ENCODE measurements at regions of chr10 and their contacts with region 1.

Region 1: GRCh38 chr10:73956476-73957359 is 41.2 kb upstream of the VCL start:
- DNase-seq: peak; percentile 35
- H3K4me3 Mint-ChIP-seq: peak overlapping the region; percentile 57
- H3K27ac Mint-ChIP-seq: peak overlapping the region; percentile 85
- H3K4me1 Mint-ChIP-seq: peaks cover 44% of the 10 kb centered on the region
- H3K27me3 Mint-ChIP-seq: no peaks in the 10 kb centered on the region

Region 2: DNA sequence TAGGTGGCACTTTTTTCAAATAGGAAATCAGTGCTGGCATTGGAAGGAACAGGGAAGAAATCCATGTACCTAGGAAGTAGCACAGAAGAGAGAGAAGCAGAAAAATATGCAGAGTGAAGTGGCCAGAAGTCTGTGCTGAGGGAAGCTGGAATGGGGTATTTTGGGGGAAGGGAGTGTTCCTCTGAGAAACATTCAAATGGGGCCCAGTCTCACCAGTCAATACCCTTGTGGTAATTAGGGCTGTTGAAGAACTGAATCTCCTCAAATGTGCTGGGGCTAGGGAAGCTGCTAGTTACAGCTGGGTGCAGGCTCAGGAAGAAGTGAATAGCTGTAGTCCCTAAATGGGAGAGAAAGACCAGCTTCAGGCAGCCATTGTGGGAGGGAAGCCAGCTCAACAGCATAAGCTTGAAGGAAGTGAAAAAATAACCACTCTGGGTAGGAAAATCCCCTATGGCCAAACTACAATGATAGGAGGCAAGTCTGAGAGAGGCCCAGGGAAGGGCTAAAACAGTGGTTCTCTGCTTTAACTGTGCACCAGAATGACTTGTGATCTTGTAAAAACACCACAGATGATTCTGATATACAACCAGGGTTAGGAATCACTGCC is 152.9 kb before region 1 on chr10:
- intact Hi-C with region 1: no loop called
- DNase-seq: no peak
- H3K4me3 Mint-ChIP-seq: no peak overlapping the region
- H3K27ac Mint-ChIP-seq: peak overlapping the region; percentile 71
- H3K4me1 Mint-ChIP-seq: peaks cover 19% of the 10 kb centered on the region
- H3K27me3 Mint-ChIP-seq: no peaks in the 10 kb centered on the region

Region 3: DNA sequence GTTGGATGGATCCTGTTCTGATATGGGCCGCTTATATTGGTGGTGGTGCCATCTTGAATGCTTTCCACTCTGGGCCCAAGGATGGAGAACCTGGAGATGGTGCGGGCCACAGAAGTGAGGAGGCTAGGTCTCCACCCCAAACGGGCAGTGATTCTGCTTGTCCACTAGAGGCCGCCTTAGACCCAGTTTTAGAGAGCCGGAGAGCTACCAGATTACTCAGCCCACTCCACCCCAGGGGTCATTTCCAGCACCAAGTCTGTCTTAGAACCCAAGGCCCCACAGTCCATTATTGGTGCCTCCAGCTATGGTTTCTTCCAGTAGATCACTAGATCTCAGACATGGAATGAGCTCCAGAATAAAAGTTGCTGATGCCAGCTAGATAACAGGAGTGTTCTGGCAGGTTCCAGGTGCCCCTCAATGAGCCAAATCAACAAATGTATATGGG is 70.6 kb before region 1 on chr10:
- intact Hi-C with region 1: loop called (anchors 5 kb)
- DNase-seq: peak; percentile 56
- H3K4me3 Mint-ChIP-seq: no peak overlapping the region
- H3K27ac Mint-ChIP-seq: no peak overlapping the region
- H3K4me1 Mint-ChIP-seq: peaks cover 8% of the 10 kb centered on the region
- H3K27me3 Mint-ChIP-seq: no peaks in the 10 kb centered on the region

Region 4: DNA sequence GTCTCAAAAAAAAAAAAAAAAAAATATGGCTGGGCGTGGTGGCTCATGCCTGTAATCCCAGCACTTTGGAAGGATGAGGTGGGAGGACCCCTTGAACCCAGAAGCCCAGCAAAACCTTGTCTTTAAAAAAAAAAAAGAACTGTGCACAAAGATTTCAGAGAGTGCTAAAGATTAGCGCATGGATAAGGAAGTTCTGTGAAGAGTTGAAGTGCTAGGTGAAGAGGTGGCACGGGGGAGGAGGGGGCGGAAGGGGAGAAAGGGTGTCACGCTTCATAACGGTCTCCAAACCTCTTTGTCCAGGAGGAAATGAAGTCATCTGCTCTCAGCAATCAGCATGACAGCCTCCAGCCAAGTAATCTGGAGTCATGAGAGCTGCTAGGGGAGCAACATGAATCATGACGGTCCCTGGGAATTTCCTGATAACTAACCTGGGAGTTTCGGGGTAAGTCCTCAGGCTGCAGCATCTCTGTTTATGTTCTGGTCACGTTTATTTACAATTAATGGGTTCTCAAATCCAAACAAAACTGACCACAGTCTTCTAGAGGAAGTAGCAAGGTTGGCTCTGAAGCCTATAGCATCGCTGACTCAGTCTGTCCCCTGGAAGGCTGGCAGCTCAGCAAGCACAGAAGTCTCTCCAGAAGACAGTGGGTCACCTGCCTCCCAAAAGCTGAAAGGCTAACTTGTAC is 47.7 kb before region 1 on chr10:
- intact Hi-C with region 1: loop called (anchors 2 kb)
- DNase-seq: peak; percentile 53
- H3K4me3 Mint-ChIP-seq: peak overlapping the region; percentile 58
- H3K27ac Mint-ChIP-seq: peak overlapping the region; percentile 73
- H3K4me1 Mint-ChIP-seq: peaks cover 40% of the 10 kb centered on the region
- H3K27me3 Mint-ChIP-seq: peaks cover 5% of the 10 kb centered on the region

Region 5: GRCh38 chr10:73940634-73941221 is 16.0 kb before region 1 on chr10:
- intact Hi-C with region 1: loop called (anchors 1 kb)
- DNase-seq: peak; percentile 80
- H3K4me3 Mint-ChIP-seq: no peak overlapping the region
- H3K27ac Mint-ChIP-seq: no peak overlapping the region
- H3K4me1 Mint-ChIP-seq: peaks cover 10% of the 10 kb centered on the region
- H3K27me3 Mint-ChIP-seq: peaks cover 6% of the 10 kb centered on the region

Region 6: GRCh38 chr10:73991884-73992245 is 35.1 kb after region 1 on chr10:
- intact Hi-C with region 1: loop called (anchors 2 kb)
- DNase-seq: peak; percentile 81
- H3K4me3 Mint-ChIP-seq: no peak overlapping the region
- H3K27ac Mint-ChIP-seq: peak overlapping the region; percentile 65
- H3K4me1 Mint-ChIP-seq: peaks cover 41% of the 10 kb centered on the region
- H3K27me3 Mint-ChIP-seq: no peaks in the 10 kb centered on the region

Region 7: DNA sequence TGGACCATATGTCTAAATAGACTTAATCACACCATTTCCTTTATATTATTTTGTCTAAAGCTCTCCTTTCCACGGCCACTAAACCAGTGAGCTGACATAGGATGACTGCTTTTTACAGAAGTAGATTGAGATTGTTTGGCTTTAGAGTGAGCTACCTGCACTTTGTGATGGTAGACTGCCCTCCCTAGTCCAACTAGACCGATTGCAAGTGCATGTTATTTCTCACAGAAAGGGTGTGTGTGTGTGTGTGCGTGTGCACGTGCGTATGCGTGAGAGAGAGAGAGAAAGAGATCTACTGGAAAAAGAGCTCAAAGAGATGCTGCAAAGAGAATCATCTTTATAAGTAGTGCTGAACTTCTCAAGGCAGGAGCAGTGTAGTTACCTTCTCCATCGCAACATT is 101.9 kb after region 1 on chr10:
- intact Hi-C with region 1: loop called (anchors 1 kb)
- DNase-seq: no peak
- H3K4me3 Mint-ChIP-seq: no peak overlapping the region
- H3K27ac Mint-ChIP-seq: no peak overlapping the region
- H3K4me1 Mint-ChIP-seq: peaks cover 49% of the 10 kb centered on the region
- H3K27me3 Mint-ChIP-seq: no peaks in the 10 kb centered on the region

Region 8: GRCh38 chr10:74081192-74081803 is 124.6 kb after region 1 on chr10:
- intact Hi-C with region 1: loop called (anchors 1 kb)
- DNase-seq: no peak
- H3K4me3 Mint-ChIP-seq: no peak overlapping the region
- H3K27ac Mint-ChIP-seq: no peak overlapping the region
- H3K4me1 Mint-ChIP-seq: peaks cover 48% of the 10 kb centered on the region
- H3K27me3 Mint-ChIP-seq: no peaks in the 10 kb centered on the region

Measured in activated T-helper 2 cell treated with anti-CD3 and anti-CD28 coated beads, Interferon-gamma antibody, Interleukin-2, Interleukin-4, amounts not matched to agents 10 μg/mL and 5 μg/mL and 100 μg/mL, durations not matched to agents 14 hours and 24 hours and 36 hours (primary cell).